ENCODE measurements at regions of chr1 and their contacts with region 1.

Region 1: GRCh38 chr1:115302390-115302961 is 35.6 kb downstream of the NGF start:
- DNase-seq: peak in 1 of 2 experiments; percentile 46
- H3K4me3 ChIP-seq: no peak overlapping the region
- H3K27ac ChIP-seq: no peak overlapping the region
- H3K4me1 ChIP-seq: peaks cover 10% of the 10 kb centered on the region
- H3K27me3 ChIP-seq: no peaks in the 10 kb centered on the region
- CTCF ChIP-seq: no peak

Region 2: DNA sequence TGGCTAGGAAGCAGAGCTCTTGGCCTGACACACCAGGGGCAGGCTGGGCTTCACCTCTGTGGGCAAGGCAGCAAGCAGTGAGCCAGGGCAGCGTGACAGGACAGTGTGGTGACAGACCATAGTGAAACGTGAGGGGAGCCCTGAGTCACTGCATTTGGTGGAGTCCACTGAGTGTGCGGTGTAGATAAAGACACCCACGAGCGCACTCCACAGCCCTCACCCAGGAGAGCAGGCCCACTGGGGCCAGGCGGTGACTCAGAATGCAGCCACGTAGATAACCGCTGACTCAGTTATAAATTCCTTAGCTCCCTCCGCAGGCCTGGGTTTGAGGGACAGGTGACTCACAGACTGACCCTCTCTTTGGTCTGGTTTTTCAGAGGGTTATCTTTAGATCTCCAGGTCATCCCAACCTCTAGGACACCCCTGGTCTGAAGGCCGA is 123.1 kb before region 1 on chr1:
- CTCF ChIA-PET with region 1: no interaction called
- POLR2A ChIA-PET with region 1: interaction called, 3 read pairs
- intact Hi-C with region 1: loop called (anchors 1 kb)
- DNase-seq: peak; percentile 92 to 100
- H3K4me3 ChIP-seq: no peak overlapping the region
- H3K27ac ChIP-seq: peak overlapping the region; percentile 89
- H3K4me1 ChIP-seq: peaks cover 57% of the 10 kb centered on the region
- H3K27me3 ChIP-seq: no peaks in the 10 kb centered on the region
- CTCF ChIP-seq: no peak

Region 3: DNA sequence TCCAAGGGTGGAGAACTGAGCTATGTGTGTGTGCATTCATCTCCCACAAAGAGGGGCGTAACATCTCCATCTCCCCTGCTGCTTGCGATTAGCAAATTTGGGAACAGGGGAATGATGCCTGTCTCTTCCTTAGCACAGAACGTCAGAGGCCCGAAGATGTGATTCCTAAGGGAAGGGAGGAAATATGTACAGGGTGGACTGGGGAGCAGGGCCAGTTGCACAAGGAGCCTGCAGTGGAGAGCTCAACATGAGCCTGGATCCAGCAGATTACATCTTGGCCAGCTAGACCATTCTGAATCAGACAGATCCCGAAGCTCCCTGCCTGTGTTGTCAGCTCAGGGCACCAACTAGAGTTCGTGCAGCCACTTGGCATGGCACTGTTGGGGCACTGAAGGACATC is 82.5 kb before region 1 on chr1:
- CTCF ChIA-PET with region 1: no interaction called
- POLR2A ChIA-PET with region 1: no interaction called
- intact Hi-C with region 1: loop called (anchors 5 kb)
- DNase-seq: no peak
- H3K4me3 ChIP-seq: no peak overlapping the region
- H3K27ac ChIP-seq: no peak overlapping the region
- H3K4me1 ChIP-seq: peaks cover 66% of the 10 kb centered on the region
- H3K27me3 ChIP-seq: no peaks in the 10 kb centered on the region
- CTCF ChIP-seq: no peak

Region 4: GRCh38 chr1:115314766-115315165 is 12.3 kb after region 1 on chr1:
- CTCF ChIA-PET with region 1: no interaction called
- POLR2A ChIA-PET with region 1: interaction called, 14 read pairs
- intact Hi-C with region 1: no loop called
- DNase-seq: peak; percentile 69 to 97
- H3K4me3 ChIP-seq: peak overlapping the region; percentile 4; the same call in 1 of the 2 replicates
- H3K27ac ChIP-seq: peak overlapping the region; percentile 71
- H3K4me1 ChIP-seq: peaks cover 62% of the 10 kb centered on the region
- H3K27me3 ChIP-seq: no peaks in the 10 kb centered on the region
- CTCF ChIP-seq: no peak

Region 5: GRCh38 chr1:116514708-116515525 is 1212.4 kb after region 1 on chr1:
- CTCF ChIA-PET with region 1: no interaction called
- POLR2A ChIA-PET with region 1: no interaction called
- intact Hi-C with region 1: no loop called
- DNase-seq: peak; percentile 69 to 100
- H3K4me3 ChIP-seq: peak overlapping the region; percentile 28; the same call in 1 of the 2 replicates
- H3K27ac ChIP-seq: peak overlapping the region; percentile 98
- H3K4me1 ChIP-seq: peaks cover 77% of the 10 kb centered on the region
- H3K27me3 ChIP-seq: no peaks in the 10 kb centered on the region
- CTCF ChIP-seq: no peak

Measured in PC-9 (cell line).